GM18951 (cell line): ENCODE measurements at regions of chr4 and their contacts with region 1.

Region 1: DNA sequence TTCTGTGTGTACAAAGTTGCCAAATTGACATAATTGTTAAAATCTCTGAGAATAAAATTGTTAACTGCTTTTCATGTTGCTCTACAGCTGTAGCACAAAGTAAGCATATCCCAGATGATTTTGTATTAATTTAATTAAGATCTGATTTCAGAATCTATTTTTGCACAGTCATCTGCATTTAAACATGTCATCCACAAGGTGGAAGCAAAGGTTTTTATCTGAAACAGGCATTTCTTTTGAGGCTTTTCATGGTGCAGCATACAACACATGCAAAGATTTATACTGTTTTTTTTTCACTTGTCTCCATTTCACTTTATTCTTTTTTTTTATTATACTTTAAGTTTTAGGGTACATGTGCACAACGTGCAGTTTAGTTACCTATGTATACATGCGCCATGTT is 51.2 kb downstream of the GC start:
- POLR2A ChIP-seq: no peak

Region 2: DNA sequence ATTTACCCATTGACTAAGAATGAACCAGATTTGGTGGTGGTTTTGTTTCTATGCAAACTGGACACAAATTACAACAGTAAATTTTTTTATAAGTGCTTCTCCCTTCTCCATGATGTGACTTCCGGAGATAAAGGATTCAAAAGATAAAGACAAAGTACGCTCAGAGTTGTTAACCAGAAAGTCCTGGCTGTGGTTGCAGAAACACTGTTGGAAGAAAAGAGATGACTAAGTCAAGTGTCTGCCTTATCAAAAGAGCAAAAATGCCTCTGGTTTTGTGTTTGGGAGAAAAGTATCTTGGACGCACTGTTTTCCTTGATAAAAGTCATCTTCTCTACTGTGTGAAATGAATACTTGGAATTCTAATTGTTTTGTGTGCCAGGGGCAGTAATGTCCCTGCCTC is 162.2 kb before region 1 on chr4:
- in situ Hi-C with region 1: no loop called
- POLR2A ChIP-seq: no peak

Region 3: GRCh38 chr4:72295966-72296557 is 563.4 kb after region 1 on chr4:
- in situ Hi-C with region 1: loop called (anchors 25 kb)
- POLR2A ChIP-seq: no peak